Caco-2 (cell line): ENCODE measurements at regions of chr6 and their contacts with region 1.

Region 1: DNA sequence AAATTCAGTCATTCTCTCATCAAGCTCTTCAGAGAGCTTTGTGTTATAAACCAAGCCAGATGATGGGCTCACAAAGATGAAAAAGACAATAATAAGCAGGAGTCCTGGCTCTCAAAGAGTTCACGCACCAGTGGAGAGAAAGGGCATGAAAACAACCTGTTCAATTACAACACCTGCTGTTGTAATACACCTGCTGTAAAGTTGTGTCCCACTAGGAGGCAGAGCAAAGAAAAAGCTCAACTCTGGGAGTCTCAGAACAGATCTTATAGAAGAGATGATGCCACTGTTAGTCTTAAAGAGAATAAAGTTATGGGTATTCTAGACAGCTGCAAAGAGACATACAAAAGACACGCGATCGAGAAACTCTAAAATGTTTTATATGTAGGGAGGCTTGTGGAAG is 100.6 kb downstream of the DCDC2 start:
- DNase-seq: peak in 1 of 2 experiments; percentile 43
- H3K4me3 ChIP-seq: no peak overlapping the region
- H3K4me3 Mint-ChIP-seq: no peak overlapping the region
- H3K27ac Mint-ChIP-seq: peak overlapping the region; percentile 6
- H3K4me1 ChIP-seq: no peaks in the 10 kb centered on the region
- H3K4me1 Mint-ChIP-seq: peaks cover 20% of the 10 kb centered on the region
- H3K27me3 ChIP-seq: no peaks in the 10 kb centered on the region
- H3K27me3 Mint-ChIP-seq: no peaks in the 10 kb centered on the region
- CTCF ChIP-seq: peak; percentile 18 to 29

Region 2: GRCh38 chr6:24223115-24223919 is 34.0 kb before region 1 on chr6:
- CTCF ChIA-PET with region 1: no interaction called
- POLR2A ChIA-PET with region 1: no interaction called
- intact Hi-C with region 1: no loop called
- DNase-seq: peak in 1 of 2 experiments; percentile 58
- H3K4me3 ChIP-seq: no peak overlapping the region
- H3K4me3 Mint-ChIP-seq: no peak overlapping the region
- H3K27ac Mint-ChIP-seq: peak overlapping the region; percentile 52
- H3K4me1 ChIP-seq: peaks cover 5% of the 10 kb centered on the region; the same call in 1 of the 2 replicates
- H3K4me1 Mint-ChIP-seq: peaks cover 32% of the 10 kb centered on the region
- H3K27me3 ChIP-seq: no peaks in the 10 kb centered on the region
- H3K27me3 Mint-ChIP-seq: no peaks in the 10 kb centered on the region
- CTCF ChIP-seq: no peak

Region 3: GRCh38 chr6:24274441-24275083 is 17.3 kb after region 1 on chr6:
- CTCF ChIA-PET with region 1: interaction called, 4 read pairs
- POLR2A ChIA-PET with region 1: no interaction called
- intact Hi-C with region 1: loop called (anchors 1 kb)
- DNase-seq: no peak
- H3K4me3 ChIP-seq: no peak overlapping the region
- H3K4me3 Mint-ChIP-seq: no peak overlapping the region
- H3K27ac Mint-ChIP-seq: no peak overlapping the region
- H3K4me1 ChIP-seq: peaks cover 26% of the 10 kb centered on the region
- H3K4me1 Mint-ChIP-seq: peaks cover 25% of the 10 kb centered on the region
- H3K27me3 ChIP-seq: no peaks in the 10 kb centered on the region
- H3K27me3 Mint-ChIP-seq: no peaks in the 10 kb centered on the region
- CTCF ChIP-seq: peak; percentile 35 to 62